Activated T-helper 2 cell treated with anti-CD3 and anti-CD28 coated beads, Interferon-gamma antibody, Interleukin-2, Interleukin-4, amounts not matched to agents 10 μg/mL and 5 μg/mL and 100 μg/mL, durations not matched to agents 14 hours and 24 hours and 36 hours (primary cell): ENCODE measurements at regions of chr10 and their contacts with region 1.

Region 1: GRCh38 chr10:115772606-115773005 is 500.4 kb downstream of the GFRA1 start:
- DNase-seq: no peak
- H3K4me3 Mint-ChIP-seq: no peak overlapping the region
- H3K27ac Mint-ChIP-seq: no peak overlapping the region
- H3K4me1 Mint-ChIP-seq: no peaks in the 10 kb centered on the region
- H3K27me3 Mint-ChIP-seq: no peaks in the 10 kb centered on the region

Region 2: GRCh38 chr10:115762029-115762428 is 10.6 kb before region 1 on chr10:
- intact Hi-C with region 1: no loop called
- DNase-seq: no peak
- H3K4me3 Mint-ChIP-seq: no peak overlapping the region
- H3K27ac Mint-ChIP-seq: no peak overlapping the region
- H3K4me1 Mint-ChIP-seq: no peaks in the 10 kb centered on the region
- H3K27me3 Mint-ChIP-seq: no peaks in the 10 kb centered on the region

Region 3: GRCh38 chr10:115844591-115844990 is 72.0 kb after region 1 on chr10:
- intact Hi-C with region 1: loop called (anchors 2 kb)
- DNase-seq: no peak
- H3K4me3 Mint-ChIP-seq: no peak overlapping the region
- H3K27ac Mint-ChIP-seq: no peak overlapping the region
- H3K4me1 Mint-ChIP-seq: no peaks in the 10 kb centered on the region
- H3K27me3 Mint-ChIP-seq: no peaks in the 10 kb centered on the region

Region 4: GRCh38 chr10:115882021-115882420 is 109.4 kb after region 1 on chr10:
- intact Hi-C with region 1: no loop called
- DNase-seq: no peak
- H3K4me3 Mint-ChIP-seq: no peak overlapping the region
- H3K27ac Mint-ChIP-seq: no peak overlapping the region
- H3K4me1 Mint-ChIP-seq: no peaks in the 10 kb centered on the region
- H3K27me3 Mint-ChIP-seq: no peaks in the 10 kb centered on the region